Transverse colon (tissue), 4 donors: ENCODE measurements at regions of chr16 and their contacts with region 1.

Region 1: GRCh38 chr16:20774703-20775362 is 11.0 kb downstream of the ACSM3 start:
- DNase-seq: peak; percentile 68
- H3K4me3 ChIP-seq: no peak overlapping the region
- H3K27ac ChIP-seq: no peak overlapping the region
- H3K4me1 ChIP-seq: no peaks in the 10 kb centered on the region
- H3K27me3 ChIP-seq: no peaks in the 10 kb centered on the region
- CTCF ChIP-seq: peak; percentile 36 to 56 (median 41)
- EP300 ChIP-seq: no peak
- POLR2A ChIP-seq: no peak

Region 2: GRCh38 chr16:20791923-20792612 is 17.2 kb after region 1 on chr16:
- in situ Hi-C with region 1: no loop called
- intact Hi-C with region 1: loop called (anchors 1 kb)
- DNase-seq: no peak
- H3K4me3 ChIP-seq: no peak overlapping the region
- H3K27ac ChIP-seq: no peak overlapping the region
- H3K4me1 ChIP-seq: no peaks in the 10 kb centered on the region
- H3K27me3 ChIP-seq: no peaks in the 10 kb centered on the region
- CTCF ChIP-seq: no peak
- EP300 ChIP-seq: no peak
- POLR2A ChIP-seq: no peak

Region 3: GRCh38 chr16:21005008-21005407 is 230.2 kb after region 1 on chr16:
- in situ Hi-C with region 1: no loop called
- intact Hi-C with region 1: no loop called
- DNase-seq: no peak
- H3K4me3 ChIP-seq: no peak overlapping the region
- H3K27ac ChIP-seq: no peak overlapping the region
- H3K4me1 ChIP-seq: no peaks in the 10 kb centered on the region
- H3K27me3 ChIP-seq: no peaks in the 10 kb centered on the region
- CTCF ChIP-seq: no peak
- EP300 ChIP-seq: no peak
- POLR2A ChIP-seq: no peak